Common myeloid progenitor, CD34-positive (primary cell): ENCODE measurements at regions of chr11 and their contacts with region 1.

Region 1: GRCh38 chr11:118353084-118353710 is 6.2 kb upstream of the UBE4A start:
- DNase-seq: peak; percentile 41 to 72 (median 59)
- H3K4me3 ChIP-seq: no peak overlapping the region
- H3K27ac ChIP-seq: no peak overlapping the region
- H3K4me1 ChIP-seq: no peaks in the 10 kb centered on the region
- H3K27me3 ChIP-seq: peaks cover 0 to 2% (median 0%) of the 10 kb centered on the region in 5 experiments

Region 2: GRCh38 chr11:118295834-118296454 is 57.3 kb before region 1 on chr11:
- CTCF ChIA-PET with region 1: interaction called, 22 read pairs
- POLR2A ChIA-PET with region 1: no interaction called
- DNase-seq: peak; percentile 56 to 76 (median 74)
- H3K4me3 ChIP-seq: no peak overlapping the region
- H3K27ac ChIP-seq: no peak overlapping the region
- H3K4me1 ChIP-seq: peaks cover 0 to 2% (median 0%) of the 10 kb centered on the region in 4 experiments
- H3K27me3 ChIP-seq: no peaks in the 10 kb centered on the region

Region 3: GRCh38 chr11:118338637-118339061 is 14.5 kb before region 1 on chr11:
- CTCF ChIA-PET with region 1: interaction called, 14 read pairs
- POLR2A ChIA-PET with region 1: no interaction called
- DNase-seq: peak in 2 of 3 donors; percentile 37 to 56
- H3K4me3 ChIP-seq: no peak overlapping the region
- H3K27ac ChIP-seq: no peak overlapping the region
- H3K4me1 ChIP-seq: peaks cover 0 to 10% (median 2%) of the 10 kb centered on the region in 4 experiments
- H3K27me3 ChIP-seq: no peaks in the 10 kb centered on the region